Right ventricle myocardium superior (tissue), 1 donor: ENCODE measurements at regions of chr6 and their contacts with region 1.

Region 1: DNA sequence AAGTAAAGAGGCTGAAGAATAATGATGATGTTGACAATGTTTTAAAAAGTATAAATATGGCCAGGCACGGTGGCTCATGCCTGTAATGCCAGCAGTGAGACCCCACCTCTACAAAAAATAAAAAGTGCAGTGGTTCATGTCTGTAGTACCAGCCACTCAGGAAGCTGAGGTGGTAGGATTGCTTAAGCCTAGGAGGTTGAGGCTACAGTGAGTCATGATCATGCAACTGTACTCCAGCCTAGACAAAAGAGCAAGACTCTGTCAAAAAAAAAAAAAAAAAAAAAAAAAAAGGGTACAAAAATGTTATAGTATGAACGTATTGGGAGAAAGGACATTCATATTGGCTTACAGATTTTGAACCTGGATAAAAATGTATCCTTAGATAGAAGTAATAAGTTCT is 543.1 kb upstream of the IRAK1BP1 start:
- DNase-seq: no peak
- ATAC-seq: no peak

Region 2: GRCh38 chr6:78253618-78254017 is 70.6 kb before region 1 on chr6:
- intact Hi-C with region 1: loop called (anchors 2 kb)
- DNase-seq: no peak
- ATAC-seq: no peak